B cell (primary cell): ENCODE measurements at regions of chr4 and their contacts with region 1.

Region 1: GRCh38 chr4:109433205-109434006 is at the start of gene SEC24B:
- DNase-seq: peak; percentile 96
- ATAC-seq: peak; percentile 89
- H3K4me3 ChIP-seq: peak within 1 kb of the TSS; percentile 63 to 86 (median 73)
- H3K4me3 Mint-ChIP-seq: peak within 1 kb of the TSS; percentile 92
- H3K27ac ChIP-seq: peak within 1 kb of the TSS; percentile 91 to 92
- H3K27ac Mint-ChIP-seq: peak within 1 kb of the TSS; percentile 95
- H3K4me1 ChIP-seq: peaks cover 21 to 25% of the 10 kb centered on the region in 2 donors
- H3K4me1 Mint-ChIP-seq: peaks cover 49% of the 10 kb centered on the region
- H3K27me3 ChIP-seq: no peaks in the 10 kb centered on the region
- H3K27me3 Mint-ChIP-seq: no peaks in the 10 kb centered on the region
- CTCF ChIP-seq: peak; percentile 95
- total RNA-seq, gene SEC24B: 46.4 and 47.7 TPM in 2 replicates

Region 2: DNA sequence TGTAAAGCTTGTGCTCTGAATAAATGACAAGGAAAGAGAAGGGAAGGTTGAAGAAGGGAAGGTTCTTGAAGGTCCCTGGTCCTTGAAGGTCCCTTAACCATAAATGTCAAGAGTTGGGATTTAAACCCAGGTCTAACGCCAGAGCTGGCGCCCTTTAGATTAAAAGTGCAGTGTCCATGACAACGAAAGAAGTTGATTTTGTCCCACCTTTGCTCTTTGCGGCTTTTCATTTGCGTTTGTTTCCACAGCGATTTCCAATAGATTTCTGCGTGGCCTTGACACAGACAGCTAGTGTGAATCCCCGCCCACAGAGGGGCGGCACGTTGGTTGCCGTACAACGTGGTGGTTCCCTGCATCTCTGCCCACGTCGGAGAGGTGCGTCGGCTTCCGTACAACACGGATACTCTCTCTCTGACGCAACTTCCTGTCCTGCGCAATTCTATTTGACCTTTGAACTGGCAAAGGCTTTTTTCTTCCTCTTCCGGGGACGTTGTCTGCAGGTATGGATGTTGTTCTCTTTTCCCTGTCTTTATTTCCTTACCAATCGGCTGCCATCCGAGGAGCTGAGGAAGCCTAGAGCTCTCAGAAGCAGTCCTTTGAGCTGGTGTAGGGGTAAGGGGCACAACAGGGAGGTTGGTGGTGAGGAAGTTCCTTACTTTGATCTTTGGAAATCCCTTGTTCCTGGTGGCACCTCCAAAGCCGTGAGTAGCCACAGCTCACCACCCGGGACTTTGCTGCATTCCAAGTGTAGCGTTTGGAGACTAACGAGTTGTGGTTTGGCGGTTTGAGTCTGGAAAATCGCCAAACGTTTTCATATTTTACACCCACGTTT is 813.1 kb before region 1 on chr4 and contains the start of gene RPL34:
- CTCF ChIA-PET with region 1: no interaction called
- POLR2A ChIA-PET with region 1: no interaction called
- intact Hi-C with region 1: loop called (anchors 10 kb)
- DNase-seq: peak; percentile 98
- ATAC-seq: peak; percentile 100
- H3K4me3 ChIP-seq: peak within 1 kb of the TSS; percentile 86 to 100 (median 98)
- H3K4me3 Mint-ChIP-seq: peak within 1 kb of the TSS; percentile 96
- H3K27ac ChIP-seq: peak within 1 kb of the TSS; percentile 87 to 88
- H3K27ac Mint-ChIP-seq: peak within 1 kb of the TSS; percentile 93
- H3K4me1 ChIP-seq: peaks cover 20 to 24% of the 10 kb centered on the region in 2 donors
- H3K4me1 Mint-ChIP-seq: peaks cover 44% of the 10 kb centered on the region
- H3K27me3 ChIP-seq: no peaks in the 10 kb centered on the region
- H3K27me3 Mint-ChIP-seq: no peaks in the 10 kb centered on the region
- CTCF ChIP-seq: no peak
- total RNA-seq, gene RPL34: 2,198 and 2,267 TPM in 2 replicates

Region 3: GRCh38 chr4:108889696-108890483 is 543.5 kb before region 1 on chr4:
- CTCF ChIA-PET with region 1: no interaction called
- POLR2A ChIA-PET with region 1: no interaction called
- intact Hi-C with region 1: no loop called
- DNase-seq: no peak
- ATAC-seq: no peak
- H3K4me3 ChIP-seq: no peak overlapping the region
- H3K4me3 Mint-ChIP-seq: no peak overlapping the region
- H3K27ac ChIP-seq: no peak overlapping the region
- H3K27ac Mint-ChIP-seq: no peak overlapping the region
- H3K4me1 ChIP-seq: no peaks in the 10 kb centered on the region
- H3K4me1 Mint-ChIP-seq: no peaks in the 10 kb centered on the region
- H3K27me3 ChIP-seq: no peaks in the 10 kb centered on the region
- H3K27me3 Mint-ChIP-seq: peaks cover 9% of the 10 kb centered on the region
- CTCF ChIP-seq: no peak

Region 4: GRCh38 chr4:109444182-109444844 is 10.9 kb after region 1 on chr4:
- CTCF ChIA-PET with region 1: interaction called, 55 read pairs
- POLR2A ChIA-PET with region 1: interaction called, 4 read pairs
- intact Hi-C with region 1: loop called (anchors 1 kb)
- DNase-seq: peak; percentile 71
- ATAC-seq: peak; percentile 80
- H3K4me3 ChIP-seq: peak overlapping the region in 1 of 5 experiments; percentile 25
- H3K4me3 Mint-ChIP-seq: peak overlapping the region; percentile 12
- H3K27ac ChIP-seq: peak overlapping the region in 1 of 2 donors; percentile 45
- H3K27ac Mint-ChIP-seq: peak overlapping the region; percentile 11
- H3K4me1 ChIP-seq: peaks cover 26 to 38% of the 10 kb centered on the region in 2 donors
- H3K4me1 Mint-ChIP-seq: peaks cover 60% of the 10 kb centered on the region
- H3K27me3 ChIP-seq: no peaks in the 10 kb centered on the region
- H3K27me3 Mint-ChIP-seq: no peaks in the 10 kb centered on the region
- CTCF ChIP-seq: no peak

Region 5: DNA sequence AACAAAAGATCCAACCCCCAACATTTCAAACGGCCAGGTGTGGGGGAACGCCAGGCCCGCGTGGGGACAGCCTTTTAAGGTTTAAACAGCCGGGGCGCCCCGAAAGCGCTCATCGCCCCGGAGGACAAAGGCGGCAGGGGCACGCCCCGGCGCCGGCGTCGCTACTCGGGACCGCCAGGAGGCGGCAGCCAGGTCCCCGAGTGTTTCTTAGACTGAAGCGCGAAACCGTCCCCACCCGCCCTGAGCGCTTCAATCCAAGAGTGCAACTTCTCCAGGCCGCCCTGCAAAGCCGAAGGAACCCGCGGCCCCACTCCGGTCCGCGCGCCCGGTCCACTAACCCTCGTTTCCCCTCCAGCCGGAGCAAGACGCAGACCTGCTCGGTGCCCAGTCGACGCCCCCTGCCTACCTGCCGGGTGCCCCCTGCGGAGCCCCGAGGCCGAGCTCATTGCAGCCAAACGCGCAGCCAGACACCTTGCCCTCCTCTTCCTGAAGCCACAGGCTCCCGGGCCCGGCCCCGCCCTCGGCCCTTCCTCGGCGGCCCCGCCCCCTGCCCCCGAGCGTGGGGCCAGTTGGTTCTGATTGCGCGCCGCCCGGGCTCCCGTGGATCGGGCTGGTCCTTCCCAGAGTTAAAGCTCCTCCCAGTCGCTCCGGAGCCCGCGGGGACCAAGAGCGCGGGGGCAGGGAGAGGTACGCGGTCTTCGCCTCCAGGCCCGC is 269.7 kb after region 1 on chr4 and contains the start of gene CASP6:
- CTCF ChIA-PET with region 1: interaction called, 6 read pairs
- POLR2A ChIA-PET with region 1: no interaction called
- intact Hi-C with region 1: loop called (anchors 1 kb)
- DNase-seq: peak; percentile 78
- ATAC-seq: peak; percentile 80
- H3K4me3 ChIP-seq: peak within 1 kb of the TSS; percentile 69 to 86 (median 78)
- H3K4me3 Mint-ChIP-seq: peak within 1 kb of the TSS; percentile 97
- H3K27ac ChIP-seq: peak within 1 kb of the TSS; percentile 11 to 57
- H3K27ac Mint-ChIP-seq: peak within 1 kb of the TSS; percentile 88
- H3K4me1 ChIP-seq: peaks cover 14 to 18% of the 10 kb centered on the region in 2 donors
- H3K4me1 Mint-ChIP-seq: peaks cover 22% of the 10 kb centered on the region
- H3K27me3 ChIP-seq: no peaks in the 10 kb centered on the region
- H3K27me3 Mint-ChIP-seq: no peaks in the 10 kb centered on the region
- CTCF ChIP-seq: peak; percentile 72
- total RNA-seq, gene CASP6: 7.7 and 8.3 TPM in 2 replicates

Region 6: GRCh38 chr4:109815151-109816081 is 382.0 kb after region 1 on chr4 and contains the start of gene GAR1:
- CTCF ChIA-PET with region 1: interaction called, 7 read pairs
- POLR2A ChIA-PET with region 1: interaction called, 4 read pairs
- intact Hi-C with region 1: loop called (anchors 1 kb)
- DNase-seq: peak; percentile 91
- ATAC-seq: peak; percentile 96
- H3K4me3 ChIP-seq: peak within 1 kb of the TSS; percentile 88 to 98 (median 94)
- H3K4me3 Mint-ChIP-seq: peak within 1 kb of the TSS; percentile 99
- H3K27ac ChIP-seq: peak within 1 kb of the TSS; percentile 80 to 92
- H3K27ac Mint-ChIP-seq: peak within 1 kb of the TSS; percentile 97
- H3K4me1 ChIP-seq: peaks cover 14 to 16% of the 10 kb centered on the region in 2 donors
- H3K4me1 Mint-ChIP-seq: peaks cover 30% of the 10 kb centered on the region
- H3K27me3 ChIP-seq: no peaks in the 10 kb centered on the region
- H3K27me3 Mint-ChIP-seq: no peaks in the 10 kb centered on the region
- CTCF ChIP-seq: no peak
- total RNA-seq, gene GAR1: 10.0 and 11.0 TPM in 2 replicates

Region 7: GRCh38 chr4:110193822-110194761 is 760.7 kb after region 1 on chr4:
- CTCF ChIA-PET with region 1: no interaction called
- POLR2A ChIA-PET with region 1: no interaction called
- intact Hi-C with region 1: loop called (anchors 5 kb)
- DNase-seq: peak; percentile 82
- ATAC-seq: peak; percentile 78
- H3K4me3 ChIP-seq: no peak overlapping the region
- H3K4me3 Mint-ChIP-seq: peak overlapping the region; percentile 4
- H3K27ac ChIP-seq: peak overlapping the region; percentile 1 to 71
- H3K27ac Mint-ChIP-seq: peak overlapping the region; percentile 68
- H3K4me1 ChIP-seq: peaks cover 16 to 17% of the 10 kb centered on the region in 2 donors
- H3K4me1 Mint-ChIP-seq: peaks cover 30% of the 10 kb centered on the region
- H3K27me3 ChIP-seq: no peaks in the 10 kb centered on the region
- H3K27me3 Mint-ChIP-seq: no peaks in the 10 kb centered on the region
- CTCF ChIP-seq: no peak